ENCODE measurements at regions of chr11 and their contacts with region 1.

Region 1: DNA sequence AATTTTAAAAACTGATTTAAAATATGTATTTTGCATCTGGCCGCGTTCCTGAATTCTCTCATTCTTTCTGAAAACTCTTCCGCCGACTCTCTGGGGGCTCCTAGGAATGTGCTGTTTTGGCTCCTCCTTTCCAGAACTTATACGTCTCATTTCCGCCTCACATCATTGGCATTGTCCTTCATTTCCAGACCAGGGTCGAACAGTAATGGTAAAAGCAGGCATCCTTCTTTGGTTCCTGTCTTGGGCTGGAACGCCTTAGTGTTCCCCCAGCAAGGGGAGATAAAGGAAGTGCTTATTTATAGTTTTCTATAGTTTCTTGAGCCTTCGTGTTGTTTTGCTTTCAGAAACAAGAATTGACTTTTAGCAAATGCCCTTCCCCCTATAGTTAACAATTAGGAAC is 10.9 kb upstream of the TNNT3 start:
- DNase-seq: no peak
- CTCF ChIP-seq: peak; percentile 4

Region 2: DNA sequence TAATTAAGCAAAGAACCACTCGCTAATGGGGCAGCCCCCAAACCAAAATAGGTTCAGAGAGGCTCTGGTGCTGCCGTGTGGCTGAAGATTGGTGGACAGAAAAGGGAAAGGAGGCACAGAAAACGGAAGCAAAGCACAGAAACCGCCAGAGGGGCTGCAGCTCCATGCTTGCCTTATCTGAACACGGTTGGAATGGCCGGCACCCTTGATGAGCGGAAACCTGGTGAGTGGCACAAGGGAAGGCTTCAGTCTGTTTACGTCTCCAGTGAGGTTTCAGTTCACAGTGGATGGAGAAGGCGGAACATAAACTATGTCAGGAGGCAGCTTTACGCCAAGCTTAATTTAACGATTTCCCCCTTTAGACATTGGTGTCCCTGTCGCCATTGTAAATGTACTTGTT is 11.7 kb before region 1 on chr11:
- CTCF ChIA-PET with region 1: interaction called, 34 read pairs
- POLR2A ChIA-PET with region 1: interaction called, 3 read pairs
- DNase-seq: peak; percentile 66
- CTCF ChIP-seq: peak; percentile 37

Region 3: DNA sequence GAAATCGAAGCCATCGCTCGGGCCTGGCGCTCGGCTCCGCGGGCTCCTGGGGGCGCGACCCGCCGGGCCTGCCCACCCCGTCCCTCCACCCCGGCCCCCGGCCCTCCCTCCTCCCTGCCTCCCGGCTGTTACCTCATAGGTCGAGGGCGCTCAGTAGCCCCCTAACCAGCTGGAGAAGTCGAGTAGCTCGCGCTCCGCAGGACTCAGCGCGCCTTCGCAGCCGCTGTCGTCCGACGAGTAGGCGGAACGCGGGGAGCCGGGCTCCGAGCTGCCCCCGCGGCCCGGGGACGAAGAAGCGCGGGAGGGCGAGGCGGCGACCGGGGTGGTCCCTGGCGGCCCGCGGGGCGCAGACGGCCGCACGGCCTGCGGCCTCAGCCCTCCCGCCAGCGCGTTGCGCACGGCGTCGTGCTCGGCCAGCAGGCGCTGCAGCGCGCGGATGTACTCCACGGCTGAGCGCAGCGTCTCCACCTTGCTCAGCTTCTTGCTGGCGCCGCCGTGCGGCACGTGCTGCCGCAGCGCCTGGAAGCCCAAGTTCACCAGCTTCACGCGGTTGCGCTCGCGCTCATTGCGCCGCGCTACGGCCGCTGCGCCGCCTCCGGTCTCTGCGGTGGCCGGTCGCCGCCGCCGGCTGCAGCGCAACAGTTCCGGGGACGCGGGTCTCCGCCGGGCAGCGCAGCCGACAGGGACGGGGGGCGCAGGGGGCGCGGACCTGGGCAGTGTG is 361.1 kb after region 1 on chr11:
- CTCF ChIA-PET with region 1: no interaction called
- POLR2A ChIA-PET with region 1: no interaction called
- DNase-seq: no peak
- CTCF ChIP-seq: no peak

Measured in GM10248 (cell line).